Aorta (tissue), 5 donors: ENCODE measurements at regions of chr1 and their contacts with region 1.

Region 1: GRCh38 chr1:75985827-75986226 is 53.6 kb upstream of the ASB17 start:
- DNase-seq: no peak
- ATAC-seq: no peak
- H3K4me3 ChIP-seq: no peak overlapping the region
- H3K27ac ChIP-seq: no peak overlapping the region
- H3K4me1 ChIP-seq: no peaks in the 10 kb centered on the region
- H3K27me3 ChIP-seq: no peaks in the 10 kb centered on the region

Region 2: GRCh38 chr1:76053021-76053420 is 67.2 kb after region 1 on chr1:
- intact Hi-C with region 1: no loop called
- DNase-seq: no peak
- ATAC-seq: no peak
- H3K4me3 ChIP-seq: no peak overlapping the region
- H3K27ac ChIP-seq: no peak overlapping the region
- H3K4me1 ChIP-seq: no peaks in the 10 kb centered on the region
- H3K27me3 ChIP-seq: no peaks in the 10 kb centered on the region

Region 3: GRCh38 chr1:77134359-77134758 is 1148.5 kb after region 1 on chr1:
- intact Hi-C with region 1: loop called (anchors 5 to 10 kb)
- DNase-seq: no peak
- ATAC-seq: no peak
- H3K4me3 ChIP-seq: no peak overlapping the region
- H3K27ac ChIP-seq: no peak overlapping the region
- H3K4me1 ChIP-seq: no peaks in the 10 kb centered on the region
- H3K27me3 ChIP-seq: no peaks in the 10 kb centered on the region